Calu3 (cell line): ENCODE measurements at regions of chr16 and their contacts with region 1.

Region 1: GRCh38 chr16:28277537-28278388 is 14.6 kb upstream of the SBK1 start:
- DNase-seq: peak; percentile 88
- H3K4me3 Mint-ChIP-seq: peak overlapping the region; percentile 61
- H3K27ac Mint-ChIP-seq: no peak overlapping the region
- H3K4me1 Mint-ChIP-seq: peaks cover 14% of the 10 kb centered on the region
- H3K27me3 Mint-ChIP-seq: peaks cover 64% of the 10 kb centered on the region
- CTCF ChIP-seq: peak; percentile 98

Region 2: GRCh38 chr16:28231763-28232162 is 46.0 kb before region 1 on chr16:
- CTCF ChIA-PET with region 1: no interaction called
- intact Hi-C with region 1: no loop called
- DNase-seq: no peak
- H3K4me3 Mint-ChIP-seq: no peak overlapping the region
- H3K27ac Mint-ChIP-seq: no peak overlapping the region
- H3K4me1 Mint-ChIP-seq: no peaks in the 10 kb centered on the region
- H3K27me3 Mint-ChIP-seq: peaks cover 9% of the 10 kb centered on the region
- CTCF ChIP-seq: no peak

Region 3: GRCh38 chr16:28317040-28317880 is 39.5 kb after region 1 on chr16:
- CTCF ChIA-PET with region 1: interaction called, 7 read pairs
- intact Hi-C with region 1: loop called (anchors 1 kb)
- DNase-seq: peak; percentile 80
- H3K4me3 Mint-ChIP-seq: no peak overlapping the region
- H3K27ac Mint-ChIP-seq: no peak overlapping the region
- H3K4me1 Mint-ChIP-seq: no peaks in the 10 kb centered on the region
- H3K27me3 Mint-ChIP-seq: no peaks in the 10 kb centered on the region
- CTCF ChIP-seq: peak; percentile 94